ENCODE measurements at regions of chr2 and their contacts with region 1.

Region 1: GRCh38 chr2:55519938-55520885 is 694 bp downstream of the CFAP36 start:
- DNase-seq: no peak
- H3K4me3 Mint-ChIP-seq: peak overlapping the region; percentile 98
- H3K27ac Mint-ChIP-seq: peak overlapping the region; percentile 95
- H3K4me1 Mint-ChIP-seq: peaks cover 12% of the 10 kb centered on the region
- H3K27me3 Mint-ChIP-seq: no peaks in the 10 kb centered on the region

Region 2: DNA sequence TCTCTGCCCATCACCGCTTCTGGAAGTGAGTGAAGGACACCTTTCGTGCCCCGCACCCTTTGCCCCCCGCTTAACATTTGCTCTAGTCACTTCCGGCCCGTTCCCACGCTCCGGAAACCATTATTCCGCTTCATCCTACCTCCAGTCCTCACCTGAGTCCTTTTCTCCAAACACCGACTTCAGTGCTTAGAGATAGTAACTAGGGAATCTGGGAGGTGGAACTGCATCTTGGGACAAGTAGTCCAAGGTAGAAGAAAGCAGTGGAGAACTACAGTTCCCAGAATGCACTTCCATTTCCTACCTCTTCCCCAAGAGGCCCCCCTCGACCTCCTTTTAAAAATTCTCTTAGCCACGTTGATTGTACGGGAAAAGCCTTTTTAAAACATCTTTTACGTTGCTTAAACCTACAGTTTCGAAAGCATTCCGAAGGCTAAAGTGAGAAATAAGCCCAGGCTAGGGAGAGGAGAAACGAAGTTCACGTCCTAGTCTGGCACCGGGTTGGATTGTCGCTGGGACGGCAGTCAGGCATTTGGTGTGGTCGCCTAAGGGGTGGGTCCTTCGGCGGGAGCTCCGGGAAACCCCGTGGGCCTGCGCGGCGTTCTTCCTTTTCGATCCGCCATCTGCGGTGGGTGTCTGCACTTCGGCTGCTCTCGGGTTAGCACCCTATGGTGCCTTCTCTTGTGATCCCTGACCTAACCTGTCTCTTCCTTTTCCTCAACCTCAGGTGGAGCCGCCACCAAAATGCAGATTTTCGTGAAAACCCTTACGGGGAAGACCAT is 287.9 kb before region 1 on chr2 and contains the starts of genes CLHC1 and RPS27A:
- intact Hi-C with region 1: loop called (anchors 1 kb)
- DNase-seq: peak; percentile 98
- H3K4me3 Mint-ChIP-seq: peak within 1 kb of the TSS; percentile 91
- H3K27ac Mint-ChIP-seq: peak within 1 kb of the TSS; percentile 95
- H3K4me1 Mint-ChIP-seq: peaks cover 50% of the 10 kb centered on the region
- H3K27me3 Mint-ChIP-seq: no peaks in the 10 kb centered on the region
- total RNA-seq, gene CLHC1: 7.3 and 10.1 TPM in 2 replicates
- total RNA-seq, gene RPS27A: 1,064 and 1,070 TPM in 2 replicates

Region 3: GRCh38 chr2:55282110-55282917 is 237.9 kb before region 1 on chr2:
- intact Hi-C with region 1: loop called (anchors 10 kb)
- DNase-seq: peak; percentile 97
- H3K4me3 Mint-ChIP-seq: peak overlapping the region; percentile 92
- H3K27ac Mint-ChIP-seq: peak overlapping the region; percentile 94
- H3K4me1 Mint-ChIP-seq: peaks cover 9% of the 10 kb centered on the region
- H3K27me3 Mint-ChIP-seq: no peaks in the 10 kb centered on the region

Region 4: DNA sequence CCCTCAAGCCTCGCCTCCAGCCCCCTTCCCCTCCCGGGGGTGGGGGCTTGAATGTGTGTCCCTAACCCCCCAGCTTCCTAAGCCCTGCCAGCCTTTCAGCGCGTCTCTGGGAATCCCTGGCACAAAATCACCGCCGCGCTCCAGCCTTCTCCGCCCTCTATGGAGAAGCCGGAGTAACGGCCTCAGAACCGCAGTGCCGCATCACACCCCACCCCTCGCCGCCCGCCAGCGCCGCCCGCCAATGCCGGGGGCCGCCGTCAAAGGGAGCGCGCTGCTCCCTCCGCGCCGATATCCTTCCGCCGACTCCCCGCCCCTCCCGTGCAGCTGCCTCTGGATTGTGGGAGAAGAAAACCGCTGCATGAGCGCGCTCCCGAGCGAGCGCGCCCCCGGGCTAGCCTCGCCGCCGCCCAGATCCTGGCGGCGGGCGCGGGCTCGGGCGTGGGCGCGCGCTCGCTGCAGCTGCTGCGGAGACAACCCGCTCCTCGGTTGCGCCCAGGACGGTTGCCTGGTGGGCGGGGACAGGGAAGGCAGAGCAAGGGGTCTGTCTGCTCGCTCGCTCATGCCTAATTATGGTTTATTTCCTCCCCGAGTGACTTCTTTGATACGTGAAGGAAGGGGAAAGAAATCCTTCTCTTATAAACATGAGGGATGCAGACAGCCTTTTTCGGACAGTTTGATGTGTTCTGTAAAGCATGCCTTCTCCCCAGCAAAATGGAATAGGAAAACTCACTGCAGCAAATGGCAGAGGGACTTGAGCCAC is 100.4 kb before region 1 on chr2 and contains the start of gene CCDC88A:
- intact Hi-C with region 1: loop called (anchors 5 kb)
- DNase-seq: peak; percentile 95
- H3K4me3 Mint-ChIP-seq: peak within 1 kb of the TSS; percentile 90
- H3K27ac Mint-ChIP-seq: peak within 1 kb of the TSS; percentile 70
- H3K4me1 Mint-ChIP-seq: peaks cover 17% of the 10 kb centered on the region
- H3K27me3 Mint-ChIP-seq: peaks cover 37% of the 10 kb centered on the region
- total RNA-seq, gene CCDC88A: 9.5 and 9.8 TPM in 2 replicates

Region 5: DNA sequence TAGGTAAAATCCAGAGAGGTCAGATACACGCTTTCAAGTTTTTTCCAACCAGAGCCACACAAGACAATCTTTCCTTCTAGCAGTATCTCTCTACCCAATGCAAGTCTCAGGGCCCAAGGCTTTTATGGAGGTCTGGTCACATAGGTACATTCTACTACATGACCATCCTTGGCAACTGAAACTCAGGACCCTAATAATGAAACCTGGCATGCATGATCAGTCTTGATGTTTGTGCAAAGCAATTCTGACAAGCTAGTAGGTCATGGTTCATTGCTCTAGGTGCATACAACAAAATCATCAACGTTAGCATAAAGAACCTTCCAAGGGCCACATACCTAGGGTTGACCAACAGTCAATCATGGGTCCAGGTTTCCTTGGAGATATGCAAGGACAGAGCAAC is 67.3 kb before region 1 on chr2:
- intact Hi-C with region 1: no loop called
- DNase-seq: no peak
- H3K4me3 Mint-ChIP-seq: no peak overlapping the region
- H3K27ac Mint-ChIP-seq: no peak overlapping the region
- H3K4me1 Mint-ChIP-seq: no peaks in the 10 kb centered on the region
- H3K27me3 Mint-ChIP-seq: no peaks in the 10 kb centered on the region

Region 6: DNA sequence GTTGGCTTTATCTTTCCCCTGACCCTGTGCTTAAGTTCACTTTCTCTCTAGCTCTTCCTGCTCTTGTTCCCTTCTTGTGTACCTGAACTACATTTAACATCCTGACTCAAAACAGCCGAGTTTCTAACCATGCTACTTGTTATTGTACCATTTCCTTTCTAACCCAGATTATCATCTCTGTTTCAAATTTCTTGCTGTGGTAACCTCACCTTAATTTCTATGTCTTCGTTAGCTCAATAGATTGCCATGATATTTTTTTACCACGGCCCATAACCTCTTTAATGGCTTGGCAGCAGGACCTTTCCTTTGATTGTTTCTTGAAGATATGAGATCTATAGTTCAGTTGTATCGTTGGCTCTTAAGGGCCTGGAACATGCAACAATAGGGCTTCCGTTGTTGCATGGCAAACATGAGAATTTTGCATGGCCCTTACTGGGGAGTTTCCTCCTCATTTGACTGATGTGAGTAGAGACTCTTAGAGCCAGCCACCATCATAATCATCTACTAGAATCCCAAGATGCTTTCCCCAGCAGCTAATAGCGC is 10.4 kb after region 1 on chr2:
- intact Hi-C with region 1: loop called (anchors 1 kb)
- DNase-seq: peak; percentile 70
- H3K4me3 Mint-ChIP-seq: peak overlapping the region; percentile 64
- H3K27ac Mint-ChIP-seq: peak overlapping the region; percentile 94
- H3K4me1 Mint-ChIP-seq: peaks cover 15% of the 10 kb centered on the region
- H3K27me3 Mint-ChIP-seq: no peaks in the 10 kb centered on the region

Region 7: GRCh38 chr2:55590810-55591440 is 70.7 kb after region 1 on chr2:
- intact Hi-C with region 1: loop called (anchors 2 kb)
- DNase-seq: no peak
- H3K4me3 Mint-ChIP-seq: no peak overlapping the region
- H3K27ac Mint-ChIP-seq: peak overlapping the region; percentile 78
- H3K4me1 Mint-ChIP-seq: peaks cover 11% of the 10 kb centered on the region
- H3K27me3 Mint-ChIP-seq: no peaks in the 10 kb centered on the region

Region 8: GRCh38 chr2:55693181-55694134 is 173.2 kb after region 1 on chr2 and contains the start of gene PNPT1:
- intact Hi-C with region 1: loop called (anchors 2 kb)
- DNase-seq: peak; percentile 99
- H3K4me3 Mint-ChIP-seq: peak within 1 kb of the TSS; percentile 98
- H3K27ac Mint-ChIP-seq: peak within 1 kb of the TSS; percentile 96
- H3K4me1 Mint-ChIP-seq: peaks cover 29% of the 10 kb centered on the region
- H3K27me3 Mint-ChIP-seq: peaks cover 6% of the 10 kb centered on the region
- total RNA-seq, gene PNPT1: 68.1 and 77.9 TPM in 2 replicates